K562 (cell line): ENCODE measurements at regions of chr2 and their contacts with region 1.

Region 1: DNA sequence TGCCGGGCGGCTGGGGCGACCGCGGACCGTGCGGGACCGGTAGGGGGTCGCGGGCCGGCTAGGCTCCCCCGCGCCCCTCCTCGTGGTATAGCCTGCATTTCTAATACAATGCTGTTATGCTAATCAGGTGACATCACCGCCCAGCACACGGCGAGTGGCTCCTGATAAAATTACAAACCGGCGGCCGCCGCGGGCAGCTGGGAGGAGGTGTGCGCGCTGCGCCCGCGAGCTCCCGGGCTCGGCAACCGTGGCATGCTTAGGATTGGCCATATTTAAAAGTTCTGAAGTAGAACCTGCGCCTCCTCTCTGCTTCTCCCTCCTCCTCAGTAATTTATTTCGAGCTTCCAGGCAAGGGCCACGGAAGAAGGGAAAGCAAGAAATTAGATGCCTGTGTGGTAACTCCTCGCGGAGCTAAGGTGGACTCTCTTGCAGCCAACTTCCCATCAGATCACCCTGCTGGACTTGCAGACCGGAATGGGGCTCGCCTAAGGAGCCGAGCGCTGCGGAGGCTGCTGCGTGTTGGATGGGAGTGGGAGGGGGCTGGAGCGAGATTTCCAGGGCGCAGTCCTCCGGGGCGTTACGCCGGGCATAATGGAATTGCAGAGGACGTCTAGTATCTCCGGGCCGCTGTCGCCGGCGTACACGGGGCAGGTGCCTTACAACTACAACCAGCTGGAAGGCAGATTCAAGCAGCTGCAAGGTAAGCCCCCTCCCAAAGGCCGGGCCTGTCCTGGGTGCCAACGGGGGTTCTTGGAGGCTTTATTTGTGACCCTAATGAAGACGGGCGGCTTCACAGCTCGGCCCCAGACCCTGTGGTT is 102.3 kb downstream of the SPTBN1 start:
- DNase-seq: peak; percentile 65 to 89 (median 72)
- ATAC-seq: peak; percentile 81
- H3K4me3 ChIP-seq: peak overlapping the region; percentile 78
- H3K27ac ChIP-seq: peak overlapping the region; percentile 88
- H3K4me1 ChIP-seq: peaks cover 21 to 28% of the 10 kb centered on the region in 2 experiments
- H3K27me3 ChIP-seq: no peaks in the 10 kb centered on the region
- CTCF ChIP-seq: no peak
- EP300 ChIP-seq: no peak; the same call in 1 of the 2 replicates
- POLR2A ChIP-seq: peak; percentile 64
- RAD21 ChIP-seq: no peak

Region 2: GRCh38 chr2:54262015-54262765 is 296.2 kb before region 1 on chr2:
- CTCF ChIA-PET with region 1: no interaction called
- POLR2A ChIA-PET with region 1: no interaction called
- in situ Hi-C with region 1: no loop called
- intact Hi-C with region 1: no loop called
- DNase-seq: peak in 1 of 4 experiments; percentile 10
- ATAC-seq: no peak
- H3K4me3 ChIP-seq: no peak overlapping the region
- H3K27ac ChIP-seq: no peak overlapping the region
- H3K4me1 ChIP-seq: no peaks in the 10 kb centered on the region
- H3K27me3 ChIP-seq: no peaks in the 10 kb centered on the region
- CTCF ChIP-seq: no peak
- EP300 ChIP-seq: no peak
- POLR2A ChIP-seq: no peak
- RAD21 ChIP-seq: no peak

Region 3: GRCh38 chr2:54459037-54459441 is 99.4 kb before region 1 on chr2:
- CTCF ChIA-PET with region 1: no interaction called
- POLR2A ChIA-PET with region 1: no interaction called
- in situ Hi-C with region 1: no loop called
- intact Hi-C with region 1: no loop called
- DNase-seq: no peak
- ATAC-seq: no peak
- H3K4me3 ChIP-seq: no peak overlapping the region
- H3K27ac ChIP-seq: no peak overlapping the region
- H3K4me1 ChIP-seq: peaks cover 0 to 21% of the 10 kb centered on the region in 2 experiments; a peak in 2 of 5 replicates
- H3K27me3 ChIP-seq: peaks cover 24 to 26% of the 10 kb centered on the region in 2 experiments; a peak in 4 of 5 replicates
- CTCF ChIP-seq: no peak
- EP300 ChIP-seq: no peak
- POLR2A ChIP-seq: no peak
- RAD21 ChIP-seq: no peak

Region 4: GRCh38 chr2:54545702-54546450 is 12.5 kb before region 1 on chr2:
- CTCF ChIA-PET with region 1: no interaction called
- POLR2A ChIA-PET with region 1: interaction called, 28 read pairs
- in situ Hi-C with region 1: no loop called
- intact Hi-C with region 1: loop called (anchors 1 kb)
- DNase-seq: no peak
- ATAC-seq: peak; percentile 39
- H3K4me3 ChIP-seq: no peak overlapping the region
- H3K27ac ChIP-seq: no peak overlapping the region
- H3K4me1 ChIP-seq: peaks cover 0 to 10% of the 10 kb centered on the region in 2 experiments; a peak in 2 of 5 replicates
- H3K27me3 ChIP-seq: no peaks in the 10 kb centered on the region
- CTCF ChIP-seq: no peak
- EP300 ChIP-seq: no peak
- POLR2A ChIP-seq: no peak
- RAD21 ChIP-seq: no peak

Region 5: DNA sequence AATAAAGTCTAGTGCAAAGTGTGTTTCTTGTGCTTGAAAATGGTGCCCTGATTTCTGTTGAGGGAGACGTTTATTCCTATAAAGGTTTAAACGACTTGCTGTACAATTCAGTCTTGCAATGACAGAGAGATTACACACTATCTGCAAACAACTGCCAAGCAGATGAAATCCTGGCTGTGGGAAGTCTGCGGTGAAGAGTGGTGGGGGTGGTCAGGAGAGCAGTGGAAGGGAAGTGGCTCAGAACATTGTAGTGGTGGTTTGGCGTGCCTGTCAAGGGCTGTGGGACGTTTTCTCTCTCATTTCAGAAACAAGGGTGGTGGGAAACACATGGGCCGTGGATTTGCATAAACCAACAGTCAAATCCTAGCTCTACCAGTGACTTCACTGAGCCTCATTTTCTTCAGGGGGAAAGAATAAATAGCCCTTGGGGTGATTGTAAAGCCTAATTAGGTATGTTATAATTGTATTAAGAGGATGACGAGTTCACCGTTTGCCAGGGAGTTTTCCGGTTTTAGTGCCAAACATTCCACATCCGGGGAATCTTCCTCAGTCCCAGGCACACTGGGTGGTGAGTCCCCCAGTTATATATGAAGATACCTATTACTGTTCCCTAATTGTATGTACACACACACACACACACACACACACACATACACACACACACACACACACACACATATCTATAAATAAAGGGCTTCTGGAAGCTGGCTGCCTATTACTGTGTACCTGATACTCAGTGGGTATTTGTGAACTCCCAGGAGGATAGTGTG is 12.7 kb after region 1 on chr2:
- CTCF ChIA-PET with region 1: no interaction called
- POLR2A ChIA-PET with region 1: interaction called, 15 read pairs
- in situ Hi-C with region 1: no loop called
- intact Hi-C with region 1: loop called (anchors 2 kb)
- DNase-seq: peak in 3 of 4 experiments; percentile 26 to 83 (median 75)
- ATAC-seq: peak; percentile 75
- H3K4me3 ChIP-seq: no peak overlapping the region
- H3K27ac ChIP-seq: peak overlapping the region; percentile 4; the same call in 1 of the 3 replicates
- H3K4me1 ChIP-seq: peaks cover 23 to 73% of the 10 kb centered on the region in 2 experiments
- H3K27me3 ChIP-seq: no peaks in the 10 kb centered on the region
- CTCF ChIP-seq: no peak
- EP300 ChIP-seq: peak; percentile 90
- POLR2A ChIP-seq: no peak
- RAD21 ChIP-seq: peak in 1 of 2 experiments; percentile 26; a peak in 2 of 4 replicates

Region 6: GRCh38 chr2:54599914-54600313 is 41.5 kb after region 1 on chr2:
- CTCF ChIA-PET with region 1: no interaction called
- POLR2A ChIA-PET with region 1: no interaction called
- in situ Hi-C with region 1: no loop called
- intact Hi-C with region 1: loop called (anchors 2 kb)
- DNase-seq: peak; percentile 75 to 90 (median 80)
- ATAC-seq: peak; percentile 77
- H3K4me3 ChIP-seq: no peak overlapping the region
- H3K27ac ChIP-seq: peak overlapping the region; percentile 62
- H3K4me1 ChIP-seq: peaks cover 39 to 87% of the 10 kb centered on the region in 2 experiments
- H3K27me3 ChIP-seq: no peaks in the 10 kb centered on the region
- CTCF ChIP-seq: no peak
- EP300 ChIP-seq: peak; percentile 63; the same call in 1 of the 2 replicates
- POLR2A ChIP-seq: no peak
- RAD21 ChIP-seq: no peak

Region 7: DNA sequence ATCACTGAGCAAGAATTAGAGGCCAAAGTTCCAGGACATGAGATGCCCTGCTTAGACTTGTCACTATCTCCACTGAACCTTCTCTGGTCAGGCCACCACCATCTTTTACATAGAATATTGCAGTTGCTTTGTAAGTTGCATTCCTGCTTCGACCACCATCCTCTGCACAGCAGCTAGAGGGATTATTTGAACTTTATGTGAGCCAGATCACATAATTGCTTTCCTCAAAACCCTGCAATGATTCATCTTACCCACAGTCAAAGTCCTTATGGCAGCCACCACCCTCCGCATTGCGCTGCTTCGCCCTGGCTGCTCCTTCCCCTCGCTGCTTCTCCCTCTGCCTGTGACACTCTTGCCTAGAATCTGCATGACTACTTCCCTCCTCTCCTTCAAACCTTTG is 276.3 kb after region 1 on chr2:
- CTCF ChIA-PET with region 1: no interaction called
- POLR2A ChIA-PET with region 1: no interaction called
- in situ Hi-C with region 1: no loop called
- intact Hi-C with region 1: no loop called
- DNase-seq: no peak
- ATAC-seq: no peak
- H3K4me3 ChIP-seq: no peak overlapping the region
- H3K27ac ChIP-seq: no peak overlapping the region
- H3K4me1 ChIP-seq: no peaks in the 10 kb centered on the region
- H3K27me3 ChIP-seq: peaks cover 23 to 58% of the 10 kb centered on the region in 2 experiments
- CTCF ChIP-seq: no peak
- EP300 ChIP-seq: no peak
- POLR2A ChIP-seq: no peak
- RAD21 ChIP-seq: no peak